ENCODE measurements at regions of chr12 and their contacts with region 1.

Region 1: GRCh38 chr12:29725587-29726320 is 58.0 kb downstream of the TMTC1 start:
- DNase-seq: peak; percentile 66 to 81
- ATAC-seq: peak; percentile 85
- H3K4me3 ChIP-seq: no peak overlapping the region
- H3K27ac ChIP-seq: peak overlapping the region in 1 of 2 donors; percentile 0
- H3K4me1 ChIP-seq: no peaks in the 10 kb centered on the region
- H3K27me3 ChIP-seq: no peaks in the 10 kb centered on the region

Region 2: DNA sequence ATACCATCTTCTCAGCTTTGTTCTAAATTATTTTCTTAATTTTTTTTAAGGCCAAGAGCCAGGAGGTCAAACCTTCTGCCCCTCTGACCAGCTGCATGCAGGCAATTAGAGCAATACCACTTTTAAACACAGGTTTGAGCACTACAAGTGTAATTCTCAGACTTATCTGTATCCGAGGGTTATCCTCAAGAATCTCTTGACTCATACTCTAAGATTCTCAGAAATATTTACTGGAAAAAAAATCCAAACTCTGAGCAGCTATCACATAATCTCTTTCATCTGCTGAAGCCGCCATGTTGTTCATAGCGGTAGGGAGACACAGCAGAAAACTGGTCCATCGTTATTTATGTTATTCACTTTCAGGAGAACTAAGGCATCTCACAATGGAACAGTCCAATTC is 1725.8 kb before region 1 on chr12:
- intact Hi-C with region 1: loop called in 1 of 2 experiments (anchors 10 kb)
- DNase-seq: no peak
- ATAC-seq: no peak
- H3K4me3 ChIP-seq: no peak overlapping the region
- H3K27ac ChIP-seq: no peak overlapping the region
- H3K4me1 ChIP-seq: no peaks in the 10 kb centered on the region
- H3K27me3 ChIP-seq: no peaks in the 10 kb centered on the region

Measured in aorta (tissue), 5 donors.